ENCODE measurements at regions of chr1 and their contacts with region 1.

Region 1: DNA sequence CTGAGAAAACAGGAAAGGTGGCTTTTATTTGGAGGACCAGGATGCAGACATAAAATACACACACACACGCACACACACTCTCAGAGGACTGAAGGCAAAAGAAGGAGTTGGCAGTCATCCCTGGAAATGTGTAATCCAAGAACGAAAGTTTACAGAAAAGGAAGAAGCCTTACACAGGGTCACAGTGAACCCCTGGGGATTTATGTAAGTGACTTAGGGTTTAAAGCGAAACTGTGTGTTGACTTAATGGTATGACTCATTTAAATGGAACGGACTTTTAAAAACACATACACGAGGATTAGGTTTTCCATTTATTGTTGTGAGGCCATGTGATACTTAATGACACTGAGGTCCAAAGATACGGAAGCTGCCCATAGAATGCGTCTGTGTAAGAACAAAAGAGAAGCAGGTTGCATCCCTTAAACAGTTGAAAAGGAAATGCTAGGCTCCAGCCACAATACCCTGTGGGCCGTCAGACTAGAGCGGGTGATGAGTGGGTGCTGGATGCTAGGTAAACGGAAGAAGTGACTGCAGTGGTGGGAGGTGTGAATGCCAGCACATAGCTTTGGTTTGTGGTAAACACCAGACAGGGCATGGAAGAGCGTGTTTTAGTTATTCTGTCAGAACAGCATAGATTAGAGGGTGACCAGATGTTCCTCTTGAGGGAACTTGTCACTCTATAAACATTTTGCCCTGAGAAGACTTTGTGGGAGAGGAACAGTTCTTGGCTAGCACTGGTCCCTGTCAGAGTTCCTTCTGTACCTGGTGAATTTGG is 21.6 kb upstream of the BCL10 start:
- DNase-seq: peak; percentile 88
- ATAC-seq: peak; percentile 93
- H3K4me3 Mint-ChIP-seq: peak overlapping the region; percentile 56
- H3K27ac Mint-ChIP-seq: peak overlapping the region; percentile 72
- H3K4me1 Mint-ChIP-seq: peaks cover 26% of the 10 kb centered on the region
- H3K27me3 Mint-ChIP-seq: peaks cover 30% of the 10 kb centered on the region

Region 2: GRCh38 chr1:85321237-85321964 is 23.4 kb after region 1 on chr1:
- CTCF ChIA-PET with region 1: no interaction called
- POLR2A ChIA-PET with region 1: interaction called, 3 read pairs
- intact Hi-C with region 1: loop called (anchors 1 kb)
- DNase-seq: peak; percentile 66
- ATAC-seq: peak; percentile 86
- H3K4me3 Mint-ChIP-seq: no peak overlapping the region
- H3K27ac Mint-ChIP-seq: no peak overlapping the region
- H3K4me1 Mint-ChIP-seq: peaks cover 8% of the 10 kb centered on the region
- H3K27me3 Mint-ChIP-seq: peaks cover 49% of the 10 kb centered on the region

Region 3: DNA sequence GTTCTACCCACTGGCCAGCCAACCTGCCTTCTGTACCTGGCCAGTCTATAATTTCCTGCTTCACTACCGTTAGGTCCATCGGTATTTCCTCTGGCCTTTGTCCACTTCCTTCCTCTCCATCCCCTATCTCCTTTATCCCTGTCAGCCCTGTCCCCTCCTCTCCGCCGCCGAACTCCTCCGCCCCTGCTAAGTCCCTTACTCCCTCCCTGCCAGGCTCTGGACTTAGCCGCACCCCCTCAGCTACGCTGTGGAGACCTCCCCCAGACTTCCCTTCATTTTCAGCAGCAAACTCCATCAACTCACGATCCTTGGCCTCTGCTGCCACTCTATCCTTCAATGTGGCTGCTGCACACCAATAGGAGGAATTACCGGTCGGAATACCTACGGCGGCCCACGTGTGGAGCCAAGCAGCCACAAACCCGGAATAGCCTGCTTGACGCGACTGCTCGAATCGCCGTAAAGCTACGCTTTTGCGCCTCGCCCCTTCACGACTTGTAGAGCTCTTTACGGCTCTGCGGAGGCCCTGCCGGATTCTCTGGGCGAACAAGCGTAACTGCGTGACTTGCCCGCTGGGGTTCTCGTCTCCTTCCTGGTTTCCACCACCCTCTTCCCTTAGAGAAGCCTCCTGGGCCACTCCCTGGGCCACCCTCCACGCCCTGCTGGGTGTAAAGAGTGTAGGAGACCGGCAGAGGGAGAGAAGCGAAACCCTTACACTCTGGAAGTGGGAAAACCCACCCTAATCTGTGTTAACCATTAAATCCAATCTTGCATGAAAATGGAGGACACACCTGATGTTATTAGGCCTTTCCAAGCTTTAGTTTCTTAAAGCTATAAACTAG is 410.2 kb after region 1 on chr1 and contains the start of gene ZNHIT6:
- CTCF ChIA-PET with region 1: no interaction called
- POLR2A ChIA-PET with region 1: no interaction called
- intact Hi-C with region 1: loop called (anchors 5 to 10 kb)
- DNase-seq: peak; percentile 93
- ATAC-seq: peak; percentile 96
- H3K4me3 Mint-ChIP-seq: no peak within 1 kb of the TSS
- H3K27ac Mint-ChIP-seq: no peak within 1 kb of the TSS
- H3K4me1 Mint-ChIP-seq: peaks cover 26% of the 10 kb centered on the region
- H3K27me3 Mint-ChIP-seq: no peaks in the 10 kb centered on the region
- total RNA-seq, gene ZNHIT6: 20.7 to 23.8 TPM

Measured in activated CD4-positive, alpha-beta T cell treated with anti-CD3 and anti-CD28 coated beads for 36 hours (primary cell).